ENCODE measurements at regions of chr1 and their contacts with region 1.

Region 1: DNA sequence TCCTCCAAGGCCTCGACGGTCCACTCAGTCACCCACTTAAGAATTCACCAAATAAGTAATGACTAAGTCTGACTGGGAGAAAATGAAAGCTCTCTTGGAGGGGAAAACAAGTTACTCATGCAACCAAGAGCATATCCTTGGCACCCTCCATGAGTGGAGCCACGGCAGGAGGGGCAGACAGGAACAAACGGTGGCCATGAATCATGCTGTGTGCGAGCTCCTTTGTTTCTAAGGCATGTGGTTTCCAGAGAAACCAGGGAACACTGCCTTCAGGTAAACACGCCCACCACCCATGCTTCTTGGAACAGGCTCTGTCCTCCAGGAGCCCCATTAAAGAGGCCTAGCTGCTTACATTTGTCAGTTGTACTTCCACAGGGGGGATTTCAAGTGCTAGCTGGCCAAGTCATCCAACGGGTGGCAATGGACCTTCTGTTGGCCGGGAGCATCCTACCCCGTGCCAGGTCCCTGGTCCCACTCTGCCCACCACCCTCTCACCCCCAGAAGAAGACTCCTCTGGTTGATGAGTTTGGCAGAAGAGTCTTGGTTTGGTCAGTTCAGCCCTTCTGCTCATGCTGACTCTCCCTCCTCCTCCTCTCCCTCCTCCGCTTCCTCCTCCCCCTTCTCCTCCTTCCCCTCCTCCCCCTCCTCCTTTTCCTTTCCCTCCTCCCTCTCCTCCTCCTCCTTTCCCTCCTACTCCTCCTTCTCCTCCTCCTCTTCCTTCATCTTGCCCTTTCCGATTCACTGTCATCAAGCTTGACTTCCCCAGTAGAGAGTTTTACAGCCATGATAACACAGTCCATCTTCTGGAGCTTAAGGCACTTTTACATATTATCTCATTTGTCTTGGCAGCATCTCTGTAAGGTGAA is 107.6 kb downstream of the CCDC185 start:
- DNase-seq: peak; percentile 96
- H3K4me3 ChIP-seq: no peak overlapping the region
- CTCF ChIP-seq: no peak

Region 2: DNA sequence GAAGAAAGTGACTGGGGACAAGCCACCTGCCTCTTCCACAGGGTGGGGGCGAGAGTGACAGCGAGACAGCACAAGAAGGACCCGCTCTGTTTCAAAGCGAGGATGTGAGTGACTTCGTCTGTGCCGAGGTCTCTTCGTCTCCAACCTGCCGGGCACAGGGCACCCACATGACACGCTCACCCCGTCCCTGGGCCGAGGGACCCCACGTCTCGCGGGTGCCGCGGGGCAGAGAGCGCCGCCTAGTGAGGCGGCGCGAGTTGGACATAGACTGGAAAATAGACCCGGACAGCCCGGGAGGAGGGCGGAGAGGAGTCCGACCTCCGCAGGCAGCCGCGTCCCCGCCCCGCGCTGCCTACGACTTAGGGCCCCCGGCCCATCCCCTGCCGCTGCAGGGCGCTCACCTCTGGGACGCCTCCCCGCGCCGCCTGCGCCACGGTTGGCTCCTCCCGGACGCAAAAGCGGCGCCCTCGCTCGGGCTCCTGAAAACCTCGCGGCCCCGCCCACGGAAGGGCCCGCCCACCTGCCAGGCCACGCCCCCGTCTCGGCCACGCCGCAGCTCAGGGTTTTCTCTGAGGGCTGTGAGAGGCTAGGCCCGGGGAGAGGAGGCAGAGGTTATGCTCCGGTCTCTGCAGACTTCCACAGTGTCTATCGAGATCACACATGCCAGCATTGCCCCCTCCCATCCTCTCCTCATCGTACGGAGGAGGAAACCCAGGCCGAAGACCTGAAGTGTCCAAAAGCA is 357.8 kb before region 1 on chr1 and contains the start of gene TLR5:
- in situ Hi-C with region 1: loop called (anchors 5 kb)
- DNase-seq: no peak
- H3K4me3 ChIP-seq: peak within 1 kb of the TSS; percentile 55
- CTCF ChIP-seq: peak; percentile 79

Region 3: DNA sequence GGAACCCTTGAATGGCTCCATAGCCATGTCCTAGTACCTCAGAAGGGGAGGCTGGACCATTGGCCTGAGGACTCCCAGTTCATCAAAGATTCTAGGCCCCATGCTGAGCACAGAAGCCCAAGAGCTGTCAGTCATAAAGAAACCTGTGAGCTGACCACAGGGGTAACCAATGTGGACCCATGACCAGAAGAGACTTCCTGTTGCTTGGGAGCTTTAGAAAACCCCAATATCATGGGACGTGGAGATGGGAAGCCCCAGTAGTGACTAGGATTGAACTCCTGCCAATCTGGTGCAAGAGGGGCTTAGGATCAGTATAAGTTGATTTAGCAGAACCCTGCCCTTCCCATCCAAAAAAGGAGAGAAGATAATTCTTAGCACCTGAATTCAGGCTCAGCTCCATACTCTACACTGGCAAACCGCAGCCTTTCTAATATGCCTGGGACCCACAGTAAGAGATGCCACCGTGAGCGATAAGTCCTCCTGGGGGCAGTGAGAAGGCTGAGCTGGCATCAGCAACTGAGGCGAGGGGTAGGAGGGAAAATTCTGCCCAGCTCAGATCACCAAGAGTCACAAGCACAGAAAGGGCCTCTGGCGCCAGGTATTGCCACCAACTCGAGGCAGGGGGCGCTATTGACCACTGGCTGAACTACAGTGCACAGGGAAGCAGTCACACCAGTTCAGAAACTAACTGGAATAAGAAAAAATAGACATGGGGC is 55.8 kb after region 1 on chr1:
- in situ Hi-C with region 1: no loop called
- DNase-seq: no peak
- H3K4me3 ChIP-seq: no peak overlapping the region
- CTCF ChIP-seq: peak; percentile 32

Measured in astrocyte of the cerebellum (primary cell).